ENCODE measurements at regions of chr3 and their contacts with region 1.

Region 1: DNA sequence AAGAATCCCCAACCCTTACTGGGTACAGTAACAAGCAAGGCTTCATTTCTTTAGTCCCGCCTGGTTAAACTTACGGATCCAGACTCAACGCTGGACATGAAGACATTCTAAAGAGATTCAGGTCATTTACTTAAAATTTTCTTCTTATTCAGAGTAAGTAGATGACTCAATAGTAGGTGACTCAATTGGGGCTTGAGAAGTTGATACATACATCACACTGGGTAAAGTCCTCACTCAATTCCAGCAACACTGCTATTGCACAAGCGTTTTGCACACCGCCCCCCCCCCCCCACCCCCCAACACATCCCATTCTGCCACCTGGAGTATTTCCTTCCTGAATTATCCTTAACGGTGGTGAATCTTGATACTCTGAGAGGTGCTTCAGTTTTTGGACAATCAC is 610.0 kb downstream of the FOXP1 start:
- DNase-seq: no peak

Region 2: GRCh38 chr3:69433969-69434325 is 1539.6 kb before region 1 on chr3:
- intact Hi-C with region 1: loop called in 1 of 2 experiments (anchors 5 kb)
- DNase-seq: no peak

Region 3: GRCh38 chr3:72694398-72694797 is 1720.8 kb after region 1 on chr3:
- intact Hi-C with region 1: no loop called
- DNase-seq: no peak